ENCODE measurements at regions of chr1 and their contacts with region 1.

Region 1: GRCh38 chr1:16217061-16217785 is 4.8 kb upstream of the ARHGEF19 start:
- DNase-seq: peak; percentile 96
- H3K4me3 Mint-ChIP-seq: peak overlapping the region; percentile 59
- H3K27ac Mint-ChIP-seq: no peak overlapping the region
- H3K4me1 Mint-ChIP-seq: peaks cover 6% of the 10 kb centered on the region
- H3K27me3 Mint-ChIP-seq: no peaks in the 10 kb centered on the region
- CTCF ChIP-seq: no peak

Region 2: GRCh38 chr1:16195518-16195905 is 21.7 kb before region 1 on chr1:
- CTCF ChIA-PET with region 1: no interaction called
- POLR2A ChIA-PET with region 1: no interaction called
- intact Hi-C with region 1: no loop called
- DNase-seq: no peak
- H3K4me3 Mint-ChIP-seq: no peak overlapping the region
- H3K27ac Mint-ChIP-seq: no peak overlapping the region
- H3K4me1 Mint-ChIP-seq: no peaks in the 10 kb centered on the region
- H3K27me3 Mint-ChIP-seq: no peaks in the 10 kb centered on the region
- CTCF ChIP-seq: no peak

Region 3: GRCh38 chr1:16236511-16237342 is 19.5 kb after region 1 on chr1 and contains the start of gene CPLANE2:
- CTCF ChIA-PET with region 1: interaction called, 3 read pairs
- POLR2A ChIA-PET with region 1: interaction called, 16 read pairs
- intact Hi-C with region 1: no loop called
- DNase-seq: peak; percentile 89
- H3K4me3 Mint-ChIP-seq: peak within 1 kb of the TSS; percentile 82
- H3K27ac Mint-ChIP-seq: peak within 1 kb of the TSS; percentile 87
- H3K4me1 Mint-ChIP-seq: peaks cover 11% of the 10 kb centered on the region
- H3K27me3 Mint-ChIP-seq: no peaks in the 10 kb centered on the region
- CTCF ChIP-seq: no peak
- total RNA-seq, gene CPLANE2: 8.3 and 13.2 TPM in 2 replicates

Measured in MCF 10A (cell line).